Caco-2 (cell line): ENCODE measurements at regions of chr20 and their contacts with region 1.

Region 1: DNA sequence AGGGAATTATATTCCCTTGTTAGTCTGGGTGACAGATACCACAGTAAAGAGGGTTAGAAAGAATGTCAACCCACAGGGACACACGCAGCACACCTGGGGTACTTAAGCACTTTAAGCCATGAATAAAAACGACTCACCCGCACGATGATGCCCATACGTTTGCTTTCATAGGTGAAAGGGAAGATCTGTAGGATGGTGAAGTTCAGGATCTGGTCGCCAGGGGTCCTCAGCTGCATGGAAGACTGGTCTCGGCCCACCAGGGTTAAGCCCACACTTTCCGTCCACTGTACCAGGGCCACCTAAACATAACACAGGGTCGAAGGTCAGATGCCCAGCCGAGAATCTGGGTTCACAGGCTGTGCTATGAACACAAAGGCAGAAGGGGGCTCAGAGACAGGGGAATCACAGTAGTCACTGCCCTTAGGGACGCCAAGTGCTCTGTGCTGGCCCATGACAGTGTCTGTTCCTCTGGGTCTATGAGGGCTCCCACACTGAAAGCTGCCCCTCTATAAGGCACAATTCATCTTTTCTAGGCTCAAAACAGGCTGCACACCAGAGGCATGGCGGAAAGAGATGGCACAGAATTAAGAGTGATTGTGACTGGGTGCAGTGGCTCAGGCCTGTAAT is 96.8 kb upstream of the NFATC2 start:
- DNase-seq: peak; percentile 87 to 91
- H3K4me3 ChIP-seq: no peak overlapping the region
- H3K4me3 Mint-ChIP-seq: no peak overlapping the region
- H3K27ac Mint-ChIP-seq: peak overlapping the region; percentile 26
- H3K4me1 ChIP-seq: no peaks in the 10 kb centered on the region
- H3K4me1 Mint-ChIP-seq: peaks cover 6% of the 10 kb centered on the region
- H3K27me3 ChIP-seq: no peaks in the 10 kb centered on the region
- H3K27me3 Mint-ChIP-seq: no peaks in the 10 kb centered on the region
- CTCF ChIP-seq: peak; percentile 99 to 100

Region 2: GRCh38 chr20:51608061-51608460 is 31.3 kb before region 1 on chr20:
- CTCF ChIA-PET with region 1: no interaction called
- POLR2A ChIA-PET with region 1: no interaction called
- intact Hi-C with region 1: no loop called
- DNase-seq: no peak
- H3K4me3 ChIP-seq: no peak overlapping the region
- H3K4me3 Mint-ChIP-seq: no peak overlapping the region
- H3K27ac Mint-ChIP-seq: no peak overlapping the region
- H3K4me1 ChIP-seq: no peaks in the 10 kb centered on the region
- H3K4me1 Mint-ChIP-seq: no peaks in the 10 kb centered on the region
- H3K27me3 ChIP-seq: no peaks in the 10 kb centered on the region
- H3K27me3 Mint-ChIP-seq: no peaks in the 10 kb centered on the region
- CTCF ChIP-seq: no peak

Region 3: GRCh38 chr20:51687062-51687461 is 47.7 kb after region 1 on chr20:
- CTCF ChIA-PET with region 1: no interaction called
- POLR2A ChIA-PET with region 1: no interaction called
- intact Hi-C with region 1: loop called (anchors 5 kb)
- DNase-seq: no peak
- H3K4me3 ChIP-seq: no peak overlapping the region
- H3K4me3 Mint-ChIP-seq: no peak overlapping the region
- H3K27ac Mint-ChIP-seq: peak overlapping the region; percentile 20
- H3K4me1 ChIP-seq: no peaks in the 10 kb centered on the region
- H3K4me1 Mint-ChIP-seq: no peaks in the 10 kb centered on the region
- H3K27me3 ChIP-seq: no peaks in the 10 kb centered on the region
- H3K27me3 Mint-ChIP-seq: no peaks in the 10 kb centered on the region
- CTCF ChIP-seq: no peak

Region 4: GRCh38 chr20:51966291-51966971 is 327.1 kb after region 1 on chr20:
- CTCF ChIA-PET with region 1: no interaction called
- POLR2A ChIA-PET with region 1: no interaction called
- intact Hi-C with region 1: loop called (anchors 1 kb)
- DNase-seq: peak; percentile 87
- H3K4me3 ChIP-seq: no peak overlapping the region
- H3K4me3 Mint-ChIP-seq: no peak overlapping the region
- H3K27ac Mint-ChIP-seq: no peak overlapping the region
- H3K4me1 ChIP-seq: peaks cover 6% of the 10 kb centered on the region; the same call in 1 of the 2 replicates
- H3K4me1 Mint-ChIP-seq: peaks cover 11% of the 10 kb centered on the region
- H3K27me3 ChIP-seq: no peaks in the 10 kb centered on the region
- H3K27me3 Mint-ChIP-seq: no peaks in the 10 kb centered on the region
- CTCF ChIP-seq: peak; percentile 86 to 88

Region 5: DNA sequence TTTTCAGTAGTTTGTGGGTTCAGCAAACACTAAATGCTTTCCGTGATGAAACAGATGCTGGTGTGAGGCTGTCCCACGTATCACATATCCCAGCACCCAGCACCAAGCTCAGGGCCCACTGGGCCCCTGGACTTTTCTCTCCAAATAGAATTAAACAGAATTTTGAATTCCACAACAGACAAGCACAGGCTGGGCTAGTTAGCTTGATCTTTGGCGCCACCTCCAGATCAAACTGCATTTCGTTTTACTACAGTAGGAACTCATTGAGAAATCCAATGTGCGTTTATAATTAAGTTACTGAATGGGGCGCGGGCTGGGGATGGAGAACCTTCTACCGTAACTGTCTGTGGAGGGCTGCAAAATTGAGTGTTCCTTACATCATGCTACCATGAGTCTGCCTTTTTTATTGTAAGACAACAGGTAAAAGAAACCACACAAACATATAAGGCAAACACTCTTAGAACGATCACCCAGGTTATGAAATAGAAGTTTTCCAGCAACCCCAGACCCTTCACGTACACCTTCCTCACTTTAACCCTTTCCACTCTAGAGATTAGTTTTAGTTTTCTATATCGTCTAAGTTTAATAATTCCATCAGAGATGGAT is 444.4 kb after region 1 on chr20:
- CTCF ChIA-PET with region 1: interaction called, 6 read pairs
- POLR2A ChIA-PET with region 1: interaction called, 3 read pairs
- intact Hi-C with region 1: loop called (anchors 1 kb)
- DNase-seq: peak; percentile 86 to 87
- H3K4me3 ChIP-seq: no peak overlapping the region
- H3K4me3 Mint-ChIP-seq: no peak overlapping the region
- H3K27ac Mint-ChIP-seq: peak overlapping the region; percentile 23
- H3K4me1 ChIP-seq: peaks cover 11% of the 10 kb centered on the region
- H3K4me1 Mint-ChIP-seq: peaks cover 28% of the 10 kb centered on the region
- H3K27me3 ChIP-seq: no peaks in the 10 kb centered on the region
- H3K27me3 Mint-ChIP-seq: no peaks in the 10 kb centered on the region
- CTCF ChIP-seq: peak; percentile 95 to 96